Right lobe of liver (tissue), 6 donors: ENCODE measurements at regions of chr9 and their contacts with region 1.

Region 1: GRCh38 chr9:113868501-113868900 is 7.6 kb upstream of the ZNF618 start:
- DNase-seq: no peak
- ATAC-seq: no peak
- H3K4me3 ChIP-seq: no peak overlapping the region
- H3K27ac ChIP-seq: no peak overlapping the region
- H3K4me1 ChIP-seq: no peaks in the 10 kb centered on the region
- H3K27me3 ChIP-seq: no peaks in the 10 kb centered on the region
- CTCF ChIP-seq: no peak
- POLR2A ChIP-seq: no peak

Region 2: GRCh38 chr9:113963017-113963620 is 94.6 kb after region 1 on chr9:
- intact Hi-C with region 1: loop called in 1 of 2 experiments (anchors 10 kb)
- DNase-seq: peak in 1 of 3 donors; percentile 38
- ATAC-seq: peak in 1 of 4 donors; percentile 26
- H3K4me3 ChIP-seq: no peak overlapping the region
- H3K27ac ChIP-seq: peak overlapping the region in 1 of 3 donors; percentile 21
- H3K4me1 ChIP-seq: peaks cover 0 to 34% (median 6%) of the 10 kb centered on the region in 4 donors
- H3K27me3 ChIP-seq: no peaks in the 10 kb centered on the region
- CTCF ChIP-seq: peak; percentile 47 to 63 (median 55)
- POLR2A ChIP-seq: no peak